MCF 10A (cell line): ENCODE measurements at regions of chr1 and their contacts with region 1.

Region 1: DNA sequence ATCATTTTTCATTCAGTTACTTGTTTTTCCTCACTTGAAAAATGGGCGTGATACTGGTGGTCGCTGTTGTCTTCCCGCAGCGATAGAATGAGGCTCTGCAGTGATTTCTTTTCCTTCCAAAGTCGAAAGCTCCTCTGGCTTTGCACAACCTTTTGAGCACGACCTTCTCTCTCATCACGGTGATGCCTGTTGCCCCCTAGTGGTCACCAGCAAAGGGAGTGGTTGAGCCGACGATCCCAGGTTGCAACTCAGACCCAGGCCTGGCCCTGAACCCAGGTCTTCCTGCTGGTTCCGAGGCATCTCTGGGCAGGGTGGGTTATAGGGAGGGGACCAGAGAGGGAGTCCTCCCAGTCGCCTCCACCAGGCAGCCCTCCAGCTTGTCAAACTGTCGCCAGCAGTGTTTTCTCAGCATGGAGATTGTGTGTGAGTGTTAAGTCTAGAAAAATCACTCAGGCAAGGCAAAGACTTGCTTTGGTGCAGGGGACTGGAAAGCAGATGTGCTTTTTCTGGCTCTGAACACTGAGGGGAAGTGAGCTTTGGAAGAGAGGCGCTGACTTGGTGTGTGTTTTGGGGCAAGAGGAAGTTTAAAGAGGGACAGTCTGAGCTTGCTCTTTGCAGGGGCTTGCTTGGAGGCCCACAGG is 285.3 kb downstream of the CAMTA1 start:
- DNase-seq: peak; percentile 70
- H3K4me3 Mint-ChIP-seq: no peak overlapping the region
- H3K27ac Mint-ChIP-seq: no peak overlapping the region
- H3K4me1 Mint-ChIP-seq: no peaks in the 10 kb centered on the region
- H3K27me3 Mint-ChIP-seq: peaks cover 45% of the 10 kb centered on the region
- CTCF ChIP-seq: peak; percentile 73

Region 2: GRCh38 chr1:6794164-6794563 is 276.3 kb before region 1 on chr1:
- CTCF ChIA-PET with region 1: interaction called, 6 read pairs
- POLR2A ChIA-PET with region 1: no interaction called
- intact Hi-C with region 1: loop called (anchors 1 kb)
- DNase-seq: peak; percentile 42
- H3K4me3 Mint-ChIP-seq: no peak overlapping the region
- H3K27ac Mint-ChIP-seq: no peak overlapping the region
- H3K4me1 Mint-ChIP-seq: peaks cover 20% of the 10 kb centered on the region
- H3K27me3 Mint-ChIP-seq: no peaks in the 10 kb centered on the region
- CTCF ChIP-seq: peak; percentile 55

Region 3: DNA sequence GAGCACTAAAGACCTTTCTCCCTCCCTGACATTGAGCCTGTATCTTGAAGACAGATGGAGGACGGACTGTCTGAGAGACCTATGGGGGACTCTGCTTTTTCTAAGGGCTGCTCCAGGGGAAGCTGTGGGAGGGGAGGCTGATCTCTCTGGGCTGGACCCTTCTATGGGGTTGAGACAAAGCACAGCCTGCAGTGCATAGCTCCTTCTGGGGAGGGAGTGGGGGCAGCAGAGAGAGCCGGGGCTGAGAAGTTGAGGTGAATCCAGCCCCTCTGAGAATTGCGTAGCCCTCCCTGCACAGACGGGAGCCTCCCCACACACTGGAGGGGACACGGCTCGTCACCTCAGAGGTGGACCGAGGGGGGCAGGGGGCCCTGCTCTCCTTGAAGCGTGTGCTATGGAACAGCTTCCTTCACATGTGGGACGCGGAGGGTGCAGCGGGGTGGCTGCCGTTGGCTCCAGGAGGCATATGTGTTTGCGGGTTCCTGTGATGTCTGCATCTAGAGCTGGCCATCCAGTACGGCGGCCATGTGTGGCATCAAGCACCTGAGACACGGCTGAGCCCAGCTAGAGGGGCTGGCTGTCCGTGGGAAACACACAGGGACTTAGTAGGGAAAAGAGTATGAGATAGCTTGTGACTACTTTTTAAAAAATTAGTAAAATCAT is 13.9 kb after region 1 on chr1:
- CTCF ChIA-PET with region 1: interaction called, 16 read pairs
- POLR2A ChIA-PET with region 1: no interaction called
- intact Hi-C with region 1: no loop called
- DNase-seq: no peak
- H3K4me3 Mint-ChIP-seq: no peak overlapping the region
- H3K27ac Mint-ChIP-seq: no peak overlapping the region
- H3K4me1 Mint-ChIP-seq: no peaks in the 10 kb centered on the region
- H3K27me3 Mint-ChIP-seq: peaks cover 24% of the 10 kb centered on the region
- CTCF ChIP-seq: no peak